Natural killer cell (primary cell): ENCODE measurements at regions of chrX and their contacts with region 1.

Region 1: GRCh38 chrX:87392363-87392762 is 125.2 kb upstream of the KLHL4 start:
- DNase-seq: no peak
- ATAC-seq: no peak
- H3K4me3 ChIP-seq: no peak overlapping the region
- H3K4me3 Mint-ChIP-seq: no peak overlapping the region
- H3K27ac ChIP-seq: no peak overlapping the region
- H3K27ac Mint-ChIP-seq: no peak overlapping the region
- H3K4me1 ChIP-seq: no peaks in the 10 kb centered on the region
- H3K4me1 Mint-ChIP-seq: no peaks in the 10 kb centered on the region
- H3K27me3 ChIP-seq: no peaks in the 10 kb centered on the region
- H3K27me3 Mint-ChIP-seq: no peaks in the 10 kb centered on the region
- CTCF ChIP-seq: no peak

Region 2: GRCh38 chrX:87160435-87161010 is 231.8 kb before region 1 on chrX:
- intact Hi-C with region 1: no loop called
- DNase-seq: no peak
- ATAC-seq: no peak
- H3K4me3 ChIP-seq: no peak overlapping the region
- H3K4me3 Mint-ChIP-seq: no peak overlapping the region
- H3K27ac ChIP-seq: no peak overlapping the region
- H3K27ac Mint-ChIP-seq: no peak overlapping the region
- H3K4me1 ChIP-seq: no peaks in the 10 kb centered on the region
- H3K4me1 Mint-ChIP-seq: no peaks in the 10 kb centered on the region
- H3K27me3 ChIP-seq: no peaks in the 10 kb centered on the region
- H3K27me3 Mint-ChIP-seq: no peaks in the 10 kb centered on the region
- CTCF ChIP-seq: no peak

Region 3: GRCh38 chrX:87327267-87327666 is 65.1 kb before region 1 on chrX:
- intact Hi-C with region 1: no loop called
- DNase-seq: no peak
- ATAC-seq: no peak
- H3K4me3 ChIP-seq: no peak overlapping the region
- H3K4me3 Mint-ChIP-seq: no peak overlapping the region
- H3K27ac ChIP-seq: no peak overlapping the region
- H3K27ac Mint-ChIP-seq: no peak overlapping the region
- H3K4me1 ChIP-seq: no peaks in the 10 kb centered on the region
- H3K4me1 Mint-ChIP-seq: no peaks in the 10 kb centered on the region
- H3K27me3 ChIP-seq: no peaks in the 10 kb centered on the region
- H3K27me3 Mint-ChIP-seq: no peaks in the 10 kb centered on the region
- CTCF ChIP-seq: no peak

Region 4: DNA sequence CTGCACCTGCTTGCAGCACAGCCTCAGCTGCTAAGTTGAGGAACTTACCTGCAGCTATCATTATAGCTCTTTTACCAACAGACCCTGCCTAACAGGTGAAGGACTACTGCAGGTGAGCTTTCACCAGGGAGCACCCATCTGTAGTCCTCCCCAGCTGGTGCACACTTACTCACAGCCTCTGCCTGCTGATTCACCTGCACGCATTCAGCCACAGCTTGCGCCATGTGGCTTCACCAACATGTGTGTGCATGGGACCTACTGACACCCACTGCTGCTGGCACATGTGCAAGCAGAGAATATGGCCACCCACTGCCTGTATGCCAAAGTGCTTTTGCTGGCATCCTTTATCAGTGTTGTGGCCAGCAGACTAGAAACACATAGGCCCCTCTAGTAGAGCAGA is 21.5 kb before region 1 on chrX:
- intact Hi-C with region 1: loop called (anchors 1 kb)
- DNase-seq: no peak
- ATAC-seq: no peak
- H3K4me3 ChIP-seq: no peak overlapping the region
- H3K4me3 Mint-ChIP-seq: no peak overlapping the region
- H3K27ac ChIP-seq: no peak overlapping the region
- H3K27ac Mint-ChIP-seq: no peak overlapping the region
- H3K4me1 ChIP-seq: no peaks in the 10 kb centered on the region
- H3K4me1 Mint-ChIP-seq: no peaks in the 10 kb centered on the region
- H3K27me3 ChIP-seq: no peaks in the 10 kb centered on the region
- H3K27me3 Mint-ChIP-seq: no peaks in the 10 kb centered on the region
- CTCF ChIP-seq: no peak